Activated CD4-positive, alpha-beta memory T cell treated with anti-CD3 and anti-CD28 coated beads for 36 hours (primary cell): ENCODE measurements at regions of chr14 and their contacts with region 1.

Region 1: DNA sequence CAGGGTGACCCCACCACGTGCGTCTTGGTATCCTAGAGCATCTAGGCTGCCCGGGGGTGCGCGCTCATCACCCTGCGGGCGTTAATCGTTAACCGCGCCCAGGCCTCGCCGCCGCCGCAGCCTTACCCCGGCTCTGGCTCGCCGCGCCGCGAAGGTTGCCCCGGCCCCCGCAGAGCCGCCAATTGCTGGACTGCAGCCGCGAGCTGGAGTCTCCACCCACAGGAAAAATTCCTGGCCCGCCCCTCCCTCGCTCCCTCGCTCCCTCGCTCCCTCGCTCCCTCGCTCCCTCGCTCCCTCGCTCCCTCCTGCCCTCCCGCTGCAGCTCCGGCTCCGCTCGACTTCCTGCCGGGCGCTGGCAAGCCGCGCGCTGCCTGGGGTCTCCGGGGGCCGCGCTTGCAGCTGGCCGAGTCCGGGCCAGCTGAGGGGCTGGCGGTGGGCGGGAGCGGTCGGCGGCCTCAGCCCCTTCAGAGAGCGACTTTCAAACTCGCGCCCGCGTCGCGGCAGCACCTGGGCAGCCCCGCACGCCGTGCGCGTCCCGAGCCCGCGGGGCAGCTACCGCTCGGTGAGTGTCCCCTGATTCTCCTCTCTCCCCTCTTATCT is at the start of gene PLEKHG3:
- DNase-seq: peak; percentile 53
- H3K4me3 Mint-ChIP-seq: peak within 1 kb of the TSS; percentile 77
- H3K27ac Mint-ChIP-seq: peak within 1 kb of the TSS; percentile 82
- H3K4me1 Mint-ChIP-seq: peaks cover 63% of the 10 kb centered on the region
- H3K27me3 Mint-ChIP-seq: no peaks in the 10 kb centered on the region
- total RNA-seq, gene PLEKHG3: 20.1 to 22.6 TPM

Region 2: DNA sequence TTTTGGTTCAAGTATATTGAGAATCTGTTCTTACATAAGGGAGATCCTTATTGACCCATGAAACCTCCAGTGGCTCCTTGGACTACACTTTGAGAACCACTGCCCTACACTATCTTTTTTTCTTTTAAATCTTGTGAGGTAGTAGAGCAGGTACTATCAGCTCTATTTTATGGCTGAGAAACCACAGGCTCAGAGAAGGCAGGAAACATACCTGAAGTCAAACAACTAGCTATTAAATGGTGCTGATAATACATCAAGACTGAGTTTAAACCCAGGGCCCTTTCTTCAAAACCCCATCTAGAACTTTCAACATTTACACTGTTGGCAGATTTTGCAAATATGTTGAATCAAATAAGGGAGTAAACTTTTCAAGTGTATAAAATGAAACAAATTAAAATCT is 207.5 kb before region 1 on chr14:
- CTCF ChIA-PET with region 1: no interaction called
- POLR2A ChIA-PET with region 1: no interaction called
- intact Hi-C with region 1: no loop called
- DNase-seq: no peak
- H3K4me3 Mint-ChIP-seq: no peak overlapping the region
- H3K27ac Mint-ChIP-seq: peak overlapping the region; percentile 21
- H3K4me1 Mint-ChIP-seq: peaks cover 70% of the 10 kb centered on the region
- H3K27me3 Mint-ChIP-seq: no peaks in the 10 kb centered on the region

Region 3: DNA sequence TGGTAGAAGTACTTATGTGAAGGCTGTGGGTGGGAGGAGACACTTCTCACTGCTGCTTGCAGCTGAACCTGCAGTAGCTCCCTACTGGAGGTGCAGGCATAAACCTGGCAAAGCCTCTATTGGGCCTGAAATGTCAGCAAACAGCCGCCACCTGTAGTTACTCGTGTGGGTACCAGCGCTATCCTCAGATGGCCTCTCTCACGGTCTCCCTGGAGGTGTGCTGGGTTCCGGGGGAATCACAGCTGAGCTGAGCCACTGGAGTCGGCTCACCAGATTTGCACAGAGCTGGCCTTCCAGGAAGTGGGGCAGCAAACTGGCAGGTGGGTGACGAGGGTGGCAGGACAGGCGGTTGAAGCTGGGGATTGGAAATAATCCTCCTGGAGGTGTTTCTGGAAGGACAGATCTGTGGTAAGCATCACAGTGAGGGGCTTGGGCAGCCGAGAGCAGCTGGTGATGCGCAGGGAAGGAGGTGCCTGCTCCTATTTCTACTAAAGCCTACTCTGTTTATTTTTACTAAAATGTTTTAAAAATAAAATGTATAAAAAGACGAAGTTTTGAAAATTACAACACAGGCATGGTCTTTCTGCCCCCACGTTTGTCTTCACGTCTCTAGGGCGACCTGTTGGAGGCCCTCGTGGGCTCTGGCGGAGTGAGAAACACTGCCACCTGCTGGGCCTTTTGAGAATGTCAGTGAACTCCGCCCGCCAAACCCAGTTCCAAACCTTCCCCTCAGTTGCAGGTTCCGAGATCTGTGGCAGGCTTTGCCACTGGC is 67.8 kb before region 1 on chr14:
- CTCF ChIA-PET with region 1: no interaction called
- POLR2A ChIA-PET with region 1: no interaction called
- intact Hi-C with region 1: no loop called
- DNase-seq: peak; percentile 82
- H3K4me3 Mint-ChIP-seq: no peak overlapping the region
- H3K27ac Mint-ChIP-seq: no peak overlapping the region
- H3K4me1 Mint-ChIP-seq: no peaks in the 10 kb centered on the region
- H3K27me3 Mint-ChIP-seq: peaks cover 2% of the 10 kb centered on the region

Region 4: DNA sequence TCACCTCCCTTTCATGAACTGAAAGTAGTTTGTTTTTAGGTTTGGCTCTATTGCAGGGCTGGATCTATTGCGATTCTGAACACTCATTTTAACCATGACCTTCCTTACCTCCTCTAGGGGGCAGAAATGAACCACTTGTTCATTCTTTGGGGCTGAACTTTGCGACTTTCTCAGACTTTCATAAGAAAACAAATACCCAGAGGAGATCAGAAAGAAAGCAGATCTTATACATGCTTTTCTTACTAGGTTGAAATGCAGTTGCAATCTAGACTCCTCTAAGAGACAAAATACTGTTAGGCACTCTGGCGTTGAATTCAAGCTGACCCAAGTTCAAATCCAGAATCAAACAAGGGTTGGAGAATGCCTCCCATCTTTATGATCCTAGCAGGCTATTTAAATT is 32.7 kb before region 1 on chr14:
- CTCF ChIA-PET with region 1: interaction called, 15 read pairs
- POLR2A ChIA-PET with region 1: interaction called, 3 read pairs
- intact Hi-C with region 1: loop called (anchors 2 kb)
- DNase-seq: no peak
- H3K4me3 Mint-ChIP-seq: no peak overlapping the region
- H3K27ac Mint-ChIP-seq: no peak overlapping the region
- H3K4me1 Mint-ChIP-seq: peaks cover 24% of the 10 kb centered on the region
- H3K27me3 Mint-ChIP-seq: no peaks in the 10 kb centered on the region

Region 5: GRCh38 chr14:64723691-64724577 is 19.7 kb after region 1 on chr14:
- CTCF ChIA-PET with region 1: interaction called, 3 read pairs
- POLR2A ChIA-PET with region 1: interaction called, 9 read pairs
- intact Hi-C with region 1: loop called (anchors 1 kb)
- DNase-seq: peak; percentile 70
- H3K4me3 Mint-ChIP-seq: no peak overlapping the region
- H3K27ac Mint-ChIP-seq: peak overlapping the region; percentile 78
- H3K4me1 Mint-ChIP-seq: peaks cover 94% of the 10 kb centered on the region
- H3K27me3 Mint-ChIP-seq: no peaks in the 10 kb centered on the region

Region 6: GRCh38 chr14:64764641-64765520 is 60.6 kb after region 1 on chr14:
- CTCF ChIA-PET with region 1: interaction called, 13 read pairs
- POLR2A ChIA-PET with region 1: no interaction called
- intact Hi-C with region 1: no loop called
- DNase-seq: peak; percentile 80
- H3K4me3 Mint-ChIP-seq: peak overlapping the region; percentile 49
- H3K27ac Mint-ChIP-seq: no peak overlapping the region
- H3K4me1 Mint-ChIP-seq: peaks cover 55% of the 10 kb centered on the region
- H3K27me3 Mint-ChIP-seq: no peaks in the 10 kb centered on the region